Activated B cell treated with CpG ODN at 0.5 μM for 24 hours (primary cell): ENCODE measurements at regions of chr3 and their contacts with region 1.

Region 1: DNA sequence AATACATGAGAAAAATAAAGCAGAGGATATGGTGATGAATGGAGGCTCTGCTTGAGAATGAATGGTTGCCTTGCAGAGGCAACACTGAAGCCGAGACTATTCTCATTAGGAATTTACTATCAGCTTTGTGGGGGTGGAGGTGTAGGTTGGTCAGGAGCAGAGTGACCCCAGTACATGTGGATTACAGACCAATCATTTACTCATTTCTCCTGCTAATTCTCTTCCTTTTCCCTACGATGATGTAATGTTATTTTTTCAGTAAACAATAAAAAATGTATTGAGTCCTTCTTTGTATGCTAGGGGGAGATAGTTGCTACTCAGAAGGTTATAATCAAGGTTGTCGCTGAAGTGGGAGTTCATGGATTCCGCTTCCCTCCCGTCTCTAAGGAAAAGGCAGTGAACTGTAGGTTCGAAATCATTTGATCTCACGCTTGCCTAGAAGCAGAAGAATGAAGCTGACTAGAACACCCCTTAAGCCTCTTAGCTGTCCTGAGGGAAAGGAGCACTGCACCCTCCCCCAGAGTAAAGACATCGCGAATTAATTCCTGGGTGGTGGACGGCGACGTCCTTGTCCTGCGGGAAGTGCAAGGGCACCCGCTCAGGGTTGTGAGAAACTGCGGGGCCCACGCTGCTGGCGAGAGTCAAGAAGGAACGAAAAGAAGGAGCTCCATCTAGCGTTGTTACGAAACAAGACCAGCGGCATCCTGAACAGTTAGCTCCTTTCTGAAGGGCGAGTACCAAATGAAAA is 213.2 kb upstream of the PFN2 start:
- DNase-seq: peak; percentile 23
- ATAC-seq: peak; percentile 49
- H3K4me3 Mint-ChIP-seq: no peak overlapping the region
- H3K27ac Mint-ChIP-seq: no peak overlapping the region
- H3K4me1 Mint-ChIP-seq: no peaks in the 10 kb centered on the region
- H3K27me3 Mint-ChIP-seq: peaks cover 13% of the 10 kb centered on the region
- CTCF ChIP-seq: no peak

Region 2: DNA sequence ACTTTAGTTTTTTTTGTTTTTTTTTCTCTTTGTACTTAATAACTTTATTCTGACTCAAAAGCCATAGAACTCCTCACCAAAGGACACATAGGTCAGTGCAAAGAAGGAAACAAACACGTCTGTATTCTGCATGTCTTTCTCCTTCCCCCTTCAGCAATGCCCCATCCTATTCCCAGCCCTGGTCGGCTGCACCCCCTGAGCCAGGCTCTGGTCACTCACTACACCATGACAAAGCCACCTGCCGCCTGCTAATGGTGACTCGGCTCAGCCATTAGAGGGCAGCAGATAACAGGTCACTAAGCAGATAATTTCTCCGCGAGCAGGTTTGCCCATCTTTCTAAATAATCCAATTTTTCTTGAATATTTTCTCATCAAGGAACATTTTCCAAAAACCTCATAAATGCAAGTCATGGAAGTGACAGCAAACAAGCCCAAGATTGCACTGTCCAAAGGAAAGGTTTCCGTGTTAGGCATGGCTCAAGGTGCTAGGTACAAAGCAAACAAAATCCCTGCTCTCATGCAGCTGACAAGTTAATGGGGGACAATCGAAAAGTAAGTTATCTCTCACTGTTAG is 671.6 kb before region 1 on chr3:
- CTCF ChIA-PET with region 1: no interaction called
- POLR2A ChIA-PET with region 1: no interaction called
- intact Hi-C with region 1: loop called (anchors 10 kb)
- DNase-seq: no peak
- ATAC-seq: peak; percentile 56
- H3K4me3 Mint-ChIP-seq: no peak overlapping the region
- H3K27ac Mint-ChIP-seq: no peak overlapping the region
- H3K4me1 Mint-ChIP-seq: peaks cover 10% of the 10 kb centered on the region
- H3K27me3 Mint-ChIP-seq: peaks cover 13% of the 10 kb centered on the region
- CTCF ChIP-seq: peak; percentile 30

Region 3: DNA sequence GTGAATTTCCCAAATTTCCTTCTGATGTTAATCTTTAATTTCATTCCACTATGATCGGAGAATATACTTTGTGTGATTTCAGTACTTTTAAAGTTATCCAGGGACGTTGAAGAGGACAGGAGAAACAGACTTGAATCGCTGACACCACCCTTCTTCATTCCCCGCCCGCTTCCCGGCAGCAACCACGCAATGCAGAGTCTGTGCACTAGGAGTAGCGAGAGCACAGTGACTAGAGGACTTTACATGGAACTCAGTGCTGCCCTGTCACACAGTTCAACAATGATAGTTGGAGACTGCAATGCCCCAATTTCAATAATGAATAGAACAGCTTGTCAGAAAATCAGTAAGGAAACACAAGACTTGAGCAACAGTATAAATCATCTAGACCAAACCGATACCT is 296.9 kb before region 1 on chr3:
- CTCF ChIA-PET with region 1: no interaction called
- POLR2A ChIA-PET with region 1: no interaction called
- intact Hi-C with region 1: no loop called
- DNase-seq: no peak
- ATAC-seq: no peak
- H3K4me3 Mint-ChIP-seq: no peak overlapping the region
- H3K27ac Mint-ChIP-seq: no peak overlapping the region
- H3K4me1 Mint-ChIP-seq: peaks cover 17% of the 10 kb centered on the region
- H3K27me3 Mint-ChIP-seq: no peaks in the 10 kb centered on the region
- CTCF ChIP-seq: no peak